ENCODE measurements at regions of chr10 and their contacts with region 1.

Region 1: DNA sequence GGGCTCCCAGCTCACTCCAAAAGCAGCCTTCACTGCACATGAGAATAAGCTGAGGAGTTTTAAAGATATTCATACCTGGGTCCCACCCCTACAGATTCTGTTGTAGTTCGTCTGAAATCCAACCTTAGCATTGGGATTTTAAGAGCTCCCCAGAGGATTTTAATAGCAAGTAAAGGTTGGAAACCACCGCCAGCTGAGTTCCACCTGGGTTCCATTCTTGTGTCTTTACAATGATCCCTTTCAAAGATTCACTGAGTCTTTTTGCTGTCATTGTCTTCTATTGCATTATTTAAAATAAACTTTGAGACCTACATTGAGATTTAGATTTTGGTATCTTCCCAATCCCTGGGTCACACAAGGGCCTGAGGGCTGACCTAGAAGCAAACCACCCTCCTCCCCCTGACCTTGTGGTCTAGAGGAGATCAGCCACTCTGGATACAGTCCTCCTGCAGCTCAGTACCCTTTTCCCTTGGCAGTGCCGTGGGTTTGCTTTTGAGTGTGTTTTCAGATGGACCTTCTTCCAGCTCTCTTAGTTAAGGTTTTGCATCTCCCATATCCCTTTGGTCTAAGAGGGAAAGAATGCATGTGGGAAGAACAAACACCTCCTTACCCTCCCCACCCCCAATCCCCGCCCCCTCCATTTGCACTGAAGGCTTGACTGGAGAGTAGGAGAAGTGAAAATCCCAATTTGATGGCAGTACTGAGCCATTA is 22.6 kb upstream of the SIRT1 start:
- DNase-seq: no peak
- ATAC-seq: peak; percentile 55; the same call in 2 of the 3 replicates
- H3K4me3 ChIP-seq: no peak overlapping the region
- H3K27ac ChIP-seq: no peak overlapping the region
- H3K4me1 ChIP-seq: peaks cover 4% of the 10 kb centered on the region; the same call in 1 of the 2 replicates
- H3K27me3 ChIP-seq: no peaks in the 10 kb centered on the region; a peak in 1 of 5 replicates
- CTCF ChIP-seq: no peak
- EP300 ChIP-seq: no peak
- POLR2A ChIP-seq: no peak
- RAD21 ChIP-seq: no peak

Region 2: GRCh38 chr10:67666416-67667034 is 195.4 kb before region 1 on chr10:
- CTCF ChIA-PET with region 1: no interaction called
- POLR2A ChIA-PET with region 1: no interaction called
- in situ Hi-C with region 1: no loop called
- intact Hi-C with region 1: no loop called
- DNase-seq: peak; percentile 21
- ATAC-seq: no peak
- H3K4me3 ChIP-seq: no peak overlapping the region
- H3K27ac ChIP-seq: no peak overlapping the region
- H3K4me1 ChIP-seq: no peaks in the 10 kb centered on the region
- H3K27me3 ChIP-seq: no peaks in the 10 kb centered on the region; a peak in 1 of 5 replicates
- CTCF ChIP-seq: peak; percentile 34; the same call in 1 of the 2 replicates
- EP300 ChIP-seq: no peak
- POLR2A ChIP-seq: no peak
- RAD21 ChIP-seq: no peak

Region 3: DNA sequence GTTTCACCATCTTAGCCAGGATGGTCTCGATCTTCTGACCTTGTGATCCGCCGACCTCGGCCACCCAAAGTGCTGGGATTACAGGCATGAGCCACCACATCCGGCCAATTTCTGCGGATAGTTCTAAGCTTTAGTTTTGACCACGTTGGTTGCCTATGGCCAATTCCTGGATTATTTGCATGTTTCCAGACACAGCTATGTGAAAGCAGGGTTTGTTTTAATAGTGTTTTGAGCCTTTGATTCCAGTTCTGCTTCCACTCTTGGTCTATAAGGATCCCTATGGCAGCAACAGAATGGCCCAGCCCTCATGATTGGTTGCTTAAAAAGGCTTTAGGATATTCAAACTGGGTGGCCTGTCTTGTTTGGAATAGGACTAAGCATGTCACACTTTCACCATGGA is 41.7 kb after region 1 on chr10:
- CTCF ChIA-PET with region 1: no interaction called
- POLR2A ChIA-PET with region 1: no interaction called
- in situ Hi-C with region 1: no loop called
- intact Hi-C with region 1: no loop called
- DNase-seq: no peak
- ATAC-seq: no peak
- H3K4me3 ChIP-seq: no peak overlapping the region
- H3K27ac ChIP-seq: no peak overlapping the region
- H3K4me1 ChIP-seq: no peaks in the 10 kb centered on the region
- H3K27me3 ChIP-seq: no peaks in the 10 kb centered on the region
- CTCF ChIP-seq: no peak
- EP300 ChIP-seq: no peak
- POLR2A ChIP-seq: no peak
- RAD21 ChIP-seq: no peak

Region 4: DNA sequence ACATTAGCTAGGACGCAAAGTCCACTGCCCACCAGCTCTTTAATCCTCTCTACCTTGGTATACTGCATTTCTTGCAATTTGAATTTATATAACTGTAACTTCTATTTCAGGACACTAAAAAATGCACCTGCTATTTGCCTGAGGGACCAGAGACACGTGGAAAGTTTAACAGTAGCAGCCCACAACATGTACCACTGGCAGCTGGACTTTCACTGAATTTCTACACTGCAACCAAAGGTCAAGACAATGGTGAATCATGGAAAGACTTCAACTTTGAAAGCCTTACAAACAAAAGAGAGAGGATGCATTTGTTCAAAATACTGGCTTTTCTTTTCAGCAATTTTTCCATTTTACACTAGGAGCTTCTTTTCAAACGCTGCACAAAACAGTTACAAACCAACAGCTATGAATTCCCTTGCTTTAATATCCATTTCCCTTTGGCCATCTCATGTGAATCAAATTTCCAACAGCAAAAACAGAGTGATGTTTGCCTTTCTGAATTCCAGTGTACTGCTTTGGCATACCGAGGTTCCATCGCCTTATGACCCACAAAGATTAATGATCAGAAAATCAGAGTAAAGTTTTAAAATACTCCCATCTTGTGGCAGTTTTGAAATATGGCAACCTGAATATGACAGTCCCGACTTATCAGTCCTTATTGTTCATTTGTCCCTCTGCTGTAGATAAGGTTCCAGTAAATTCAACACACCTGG is 440.0 kb after region 1 on chr10:
- CTCF ChIA-PET with region 1: no interaction called
- POLR2A ChIA-PET with region 1: no interaction called
- in situ Hi-C with region 1: loop called (anchors 25 kb)
- intact Hi-C with region 1: loop called (anchors 10 kb)
- DNase-seq: peak; percentile 50
- ATAC-seq: peak; percentile 75
- H3K4me3 ChIP-seq: no peak overlapping the region
- H3K27ac ChIP-seq: no peak overlapping the region
- H3K4me1 ChIP-seq: peaks cover 41% of the 10 kb centered on the region
- H3K27me3 ChIP-seq: no peaks in the 10 kb centered on the region
- CTCF ChIP-seq: peak; percentile 67
- EP300 ChIP-seq: no peak
- POLR2A ChIP-seq: no peak
- RAD21 ChIP-seq: peak; percentile 44; the same call in 1 of the 2 replicates

Measured in HepG2 (cell line).